ENCODE measurements at regions of chr3 and their contacts with region 1.

Region 1: GRCh38 chr3:106573606-106574005 is 704.8 kb upstream of the CBLB start:
- DNase-seq: no peak
- ATAC-seq: no peak
- H3K4me3 ChIP-seq: no peak overlapping the region
- H3K27ac ChIP-seq: no peak overlapping the region
- H3K4me1 ChIP-seq: no peaks in the 10 kb centered on the region
- H3K27me3 ChIP-seq: no peaks in the 10 kb centered on the region
- CTCF ChIP-seq: no peak
- EP300 ChIP-seq: no peak
- POLR2A ChIP-seq: no peak
- RAD21 ChIP-seq: no peak

Region 2: DNA sequence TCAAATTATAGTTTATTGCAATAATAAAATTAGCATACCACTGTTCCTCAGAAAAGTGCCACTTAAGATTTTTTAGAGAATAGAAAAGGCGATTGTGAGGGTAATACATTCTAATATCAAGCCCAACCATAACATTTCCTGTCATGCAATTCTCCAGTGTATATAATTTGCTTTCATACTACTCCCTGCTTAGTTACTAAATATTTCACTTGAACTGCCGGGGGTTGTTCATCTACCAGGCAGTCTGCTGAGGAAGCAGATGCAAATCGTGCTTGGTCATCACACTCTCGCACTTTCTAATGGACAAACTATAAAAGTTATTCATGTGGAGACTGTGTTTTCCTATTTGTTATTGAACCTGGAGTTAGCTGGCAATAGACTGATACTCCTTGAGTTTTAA is 59.2 kb before region 1 on chr3:
- CTCF ChIA-PET with region 1: no interaction called
- POLR2A ChIA-PET with region 1: no interaction called
- RAD21 ChIA-PET with region 1: no interaction called
- SMC1A ChIA-PET with region 1: no interaction called
- in situ Hi-C with region 1: no loop called
- intact Hi-C with region 1: no loop called
- DNase-seq: no peak
- ATAC-seq: no peak
- H3K4me3 ChIP-seq: no peak overlapping the region
- H3K27ac ChIP-seq: no peak overlapping the region
- H3K4me1 ChIP-seq: no peaks in the 10 kb centered on the region
- H3K27me3 ChIP-seq: no peaks in the 10 kb centered on the region
- CTCF ChIP-seq: no peak
- EP300 ChIP-seq: no peak
- POLR2A ChIP-seq: no peak
- RAD21 ChIP-seq: no peak

Region 3: DNA sequence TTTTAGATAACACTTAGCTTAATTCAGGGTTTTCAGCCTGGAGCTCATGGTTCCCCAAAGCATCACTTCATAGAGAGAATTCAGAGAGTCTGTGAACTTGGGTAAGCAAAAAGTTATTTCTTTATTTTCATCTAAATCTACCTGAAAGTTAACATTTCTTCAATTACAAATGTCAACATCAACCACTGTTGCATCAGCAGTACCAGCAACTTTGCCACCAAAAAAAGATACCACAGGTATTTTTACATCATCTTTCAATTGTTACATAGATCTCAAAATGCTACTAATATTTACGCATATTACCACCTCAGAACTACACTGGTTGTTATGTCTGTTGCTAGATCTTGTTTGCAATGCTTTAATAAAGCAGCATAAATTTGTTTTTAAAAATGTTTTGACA is 12.3 kb after region 1 on chr3:
- CTCF ChIA-PET with region 1: interaction called, 3 read pairs
- POLR2A ChIA-PET with region 1: interaction called, 4 read pairs
- RAD21 ChIA-PET with region 1: interaction called, 4 read pairs
- SMC1A ChIA-PET with region 1: interaction called, 12 read pairs
- in situ Hi-C with region 1: no loop called
- intact Hi-C with region 1: no loop called
- DNase-seq: no peak
- ATAC-seq: no peak
- H3K4me3 ChIP-seq: no peak overlapping the region
- H3K27ac ChIP-seq: no peak overlapping the region
- H3K4me1 ChIP-seq: no peaks in the 10 kb centered on the region
- H3K27me3 ChIP-seq: no peaks in the 10 kb centered on the region
- CTCF ChIP-seq: no peak
- EP300 ChIP-seq: no peak
- POLR2A ChIP-seq: no peak
- RAD21 ChIP-seq: no peak

Region 4: GRCh38 chr3:106829206-106829605 is 255.6 kb after region 1 on chr3:
- CTCF ChIA-PET with region 1: no interaction called
- POLR2A ChIA-PET with region 1: no interaction called
- RAD21 ChIA-PET with region 1: no interaction called
- SMC1A ChIA-PET with region 1: no interaction called
- in situ Hi-C with region 1: no loop called
- intact Hi-C with region 1: no loop called
- DNase-seq: no peak
- ATAC-seq: no peak
- H3K4me3 ChIP-seq: no peak overlapping the region
- H3K27ac ChIP-seq: no peak overlapping the region
- H3K4me1 ChIP-seq: no peaks in the 10 kb centered on the region
- H3K27me3 ChIP-seq: no peaks in the 10 kb centered on the region; a peak in 1 of 4 replicates
- CTCF ChIP-seq: no peak
- EP300 ChIP-seq: no peak
- POLR2A ChIP-seq: no peak
- RAD21 ChIP-seq: no peak

Measured in GM12878 (cell line).